ENCODE measurements at regions of chr7 and their contacts with region 1.

Region 1: GRCh38 chr7:75994388-75995051 is at the start of gene TMEM120A:
- DNase-seq: peak; percentile 79 to 98
- H3K4me3 ChIP-seq: peak within 1 kb of the TSS; percentile 92
- H3K27ac ChIP-seq: no peak within 1 kb of the TSS
- H3K4me1 ChIP-seq: peaks cover 27% of the 10 kb centered on the region
- H3K27me3 ChIP-seq: no peaks in the 10 kb centered on the region
- CTCF ChIP-seq: 0 out of 2 replicates have a peak, but pooled peaks have one; percentile 16
- total RNA-seq, gene TMEM120A: 26.9 and 27.0 TPM in 2 replicates

Region 2: GRCh38 chr7:75854233-75854632 is 140.3 kb before region 1 on chr7:
- CTCF ChIA-PET with region 1: no interaction called
- POLR2A ChIA-PET with region 1: no interaction called
- intact Hi-C with region 1: no loop called
- DNase-seq: no peak
- H3K4me3 ChIP-seq: no peak overlapping the region
- H3K27ac ChIP-seq: no peak overlapping the region
- H3K4me1 ChIP-seq: no peaks in the 10 kb centered on the region
- H3K27me3 ChIP-seq: no peaks in the 10 kb centered on the region
- CTCF ChIP-seq: no peak

Region 3: DNA sequence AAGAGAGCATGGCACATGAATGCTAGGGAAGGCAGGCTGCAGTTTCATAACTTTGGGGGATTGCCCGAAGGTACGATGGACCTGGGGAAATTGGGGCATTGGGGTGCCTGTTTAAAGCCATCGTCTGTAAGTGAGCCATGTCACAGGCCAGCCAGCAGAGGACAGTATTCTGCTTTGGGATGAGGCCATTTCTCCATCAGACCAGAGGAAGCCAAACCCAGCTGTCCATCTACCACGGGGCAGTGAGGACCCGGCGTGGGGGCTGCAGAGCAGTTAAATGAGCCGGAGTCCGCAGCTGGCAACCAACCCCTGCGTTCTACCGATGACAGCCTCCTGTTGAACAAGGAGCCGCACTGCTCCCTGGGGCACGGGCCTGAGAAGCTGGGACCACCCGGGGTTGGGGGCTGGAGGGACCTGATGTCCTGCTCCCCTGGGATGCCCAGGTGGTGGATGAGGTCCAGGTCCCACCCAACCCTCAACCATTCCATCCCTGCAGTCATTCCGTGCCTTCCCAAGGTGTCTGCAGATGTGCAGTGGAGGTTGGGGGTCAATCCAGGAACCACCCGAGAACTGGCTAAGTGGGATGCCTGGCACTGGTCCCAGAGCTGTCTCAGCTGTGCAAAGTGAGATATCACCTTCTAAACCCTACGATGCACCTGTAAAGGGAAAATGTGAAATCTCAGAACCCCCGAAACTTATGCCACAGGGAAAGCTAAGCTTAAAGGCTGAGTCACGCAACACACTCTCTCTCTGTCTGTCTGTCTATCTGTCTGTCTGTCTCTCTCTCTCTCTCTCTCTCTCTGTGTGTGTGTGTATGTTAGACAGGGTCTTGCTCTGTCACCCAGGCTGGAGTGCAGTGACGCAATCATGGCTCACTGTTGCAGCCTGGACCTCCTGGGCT is 127.8 kb before region 1 on chr7:
- CTCF ChIA-PET with region 1: no interaction called
- POLR2A ChIA-PET with region 1: no interaction called
- intact Hi-C with region 1: loop called (anchors 5 kb)
- DNase-seq: peak; percentile 45 to 63
- H3K4me3 ChIP-seq: no peak overlapping the region
- H3K27ac ChIP-seq: no peak overlapping the region
- H3K4me1 ChIP-seq: peaks cover 13% of the 10 kb centered on the region
- H3K27me3 ChIP-seq: no peaks in the 10 kb centered on the region
- CTCF ChIP-seq: peak; percentile 90

Region 4: DNA sequence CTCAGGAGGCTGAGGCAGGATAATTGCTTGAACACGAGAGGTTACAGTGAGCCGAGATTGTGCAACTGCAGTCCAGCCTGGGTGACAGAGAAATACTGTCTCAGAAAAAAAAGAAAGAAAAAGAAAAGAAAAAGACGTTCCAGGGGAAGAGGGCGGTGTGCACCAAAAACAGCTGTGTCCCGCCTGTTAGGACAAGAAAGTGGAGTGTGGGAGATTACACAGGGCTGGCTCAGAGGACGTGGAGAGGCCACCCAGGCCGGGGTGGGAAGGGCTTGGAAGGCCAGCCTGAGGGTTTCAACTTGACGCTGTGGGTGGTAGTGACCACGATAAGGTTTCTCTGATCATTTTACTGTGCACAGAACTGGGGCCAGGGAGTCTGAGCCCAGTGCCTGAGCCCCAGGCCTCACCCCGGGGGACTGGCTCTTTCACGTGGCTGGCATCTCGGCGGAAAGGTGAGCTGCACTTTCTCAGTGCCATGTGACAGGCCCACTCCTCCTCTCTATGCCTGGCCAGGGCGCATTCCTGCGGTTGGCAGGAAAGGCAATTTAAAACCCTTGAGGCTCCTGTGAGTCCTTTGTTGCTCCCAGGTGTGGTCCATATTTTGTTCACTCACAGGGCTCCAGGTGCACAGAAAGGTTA is 101.8 kb before region 1 on chr7:
- CTCF ChIA-PET with region 1: interaction called, 3 read pairs
- POLR2A ChIA-PET with region 1: interaction called, 11 read pairs
- intact Hi-C with region 1: loop called (anchors 5 kb)
- DNase-seq: peak; percentile 94 to 95
- H3K4me3 ChIP-seq: no peak overlapping the region
- H3K27ac ChIP-seq: peak overlapping the region; percentile 92
- H3K4me1 ChIP-seq: peaks cover 43% of the 10 kb centered on the region
- H3K27me3 ChIP-seq: no peaks in the 10 kb centered on the region
- CTCF ChIP-seq: no peak

Region 5: GRCh38 chr7:75957012-75957736 is 37.3 kb before region 1 on chr7:
- CTCF ChIA-PET with region 1: no interaction called
- POLR2A ChIA-PET with region 1: interaction called, 7 read pairs
- intact Hi-C with region 1: loop called (anchors 1 kb)
- DNase-seq: peak; percentile 94 to 99
- H3K4me3 ChIP-seq: peak overlapping the region; percentile 36; the same call in 1 of the 2 replicates
- H3K27ac ChIP-seq: peak overlapping the region; percentile 76
- H3K4me1 ChIP-seq: peaks cover 40% of the 10 kb centered on the region
- H3K27me3 ChIP-seq: no peaks in the 10 kb centered on the region
- CTCF ChIP-seq: no peak

Region 6: GRCh38 chr7:76047811-76048667 is 53.5 kb after region 1 on chr7 and contains the starts of genes MDH2 and STYXL1:
- CTCF ChIA-PET with region 1: no interaction called
- POLR2A ChIA-PET with region 1: no interaction called
- intact Hi-C with region 1: loop called (anchors 5 kb)
- DNase-seq: peak; percentile 93 to 97
- H3K4me3 ChIP-seq: peak within 1 kb of the TSS; percentile 89
- H3K27ac ChIP-seq: peak within 1 kb of the TSS; percentile 83
- H3K4me1 ChIP-seq: peaks cover 15% of the 10 kb centered on the region
- H3K27me3 ChIP-seq: no peaks in the 10 kb centered on the region
- CTCF ChIP-seq: no peak
- total RNA-seq, gene MDH2: 319 and 328 TPM in 2 replicates
- total RNA-seq, gene STYXL1: 77.7 and 98.2 TPM in 2 replicates

Region 7: GRCh38 chr7:76220185-76221057 is 225.9 kb after region 1 on chr7:
- CTCF ChIA-PET with region 1: no interaction called
- POLR2A ChIA-PET with region 1: no interaction called
- intact Hi-C with region 1: no loop called
- DNase-seq: peak in 1 of 2 experiments; percentile 54
- H3K4me3 ChIP-seq: no peak overlapping the region
- H3K27ac ChIP-seq: no peak overlapping the region
- H3K4me1 ChIP-seq: peaks cover 8% of the 10 kb centered on the region
- H3K27me3 ChIP-seq: peaks cover 47% of the 10 kb centered on the region
- CTCF ChIP-seq: no peak

Measured in PC-9 (cell line).